Dendritic cell treated with granulocyte-macrophage colony-stimulating factor and Interleukin-4, amounts not matched to agents 40 ng/mL and 50 ng/mL, for 4 days (primary cell): ENCODE measurements at regions of chr15 and their contacts with region 1.

Region 1: DNA sequence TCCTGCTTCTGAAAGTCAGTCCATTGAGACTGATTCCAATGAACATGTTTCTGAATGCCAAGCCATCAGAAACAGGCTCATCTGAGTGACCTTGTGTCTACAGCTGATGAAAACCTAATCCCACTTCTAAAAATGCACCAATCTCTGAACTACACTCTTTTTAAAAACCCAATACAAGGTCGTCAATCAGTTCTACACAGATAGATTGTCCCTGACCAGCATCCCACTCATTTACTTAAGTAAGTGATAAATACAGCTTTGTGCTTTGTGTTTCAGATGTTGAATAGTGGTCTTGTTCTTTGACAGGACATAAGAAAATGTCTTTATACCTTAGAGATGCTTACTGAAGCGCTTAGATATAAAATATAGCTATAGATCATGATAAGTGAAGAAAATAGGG is 20.2 kb upstream of the SCG3 start:
- H3K4me3 Mint-ChIP-seq: no peak overlapping the region
- H3K27ac Mint-ChIP-seq: no peak overlapping the region
- H3K4me1 Mint-ChIP-seq: peaks cover 7% of the 10 kb centered on the region
- H3K27me3 Mint-ChIP-seq: no peaks in the 10 kb centered on the region

Region 2: DNA sequence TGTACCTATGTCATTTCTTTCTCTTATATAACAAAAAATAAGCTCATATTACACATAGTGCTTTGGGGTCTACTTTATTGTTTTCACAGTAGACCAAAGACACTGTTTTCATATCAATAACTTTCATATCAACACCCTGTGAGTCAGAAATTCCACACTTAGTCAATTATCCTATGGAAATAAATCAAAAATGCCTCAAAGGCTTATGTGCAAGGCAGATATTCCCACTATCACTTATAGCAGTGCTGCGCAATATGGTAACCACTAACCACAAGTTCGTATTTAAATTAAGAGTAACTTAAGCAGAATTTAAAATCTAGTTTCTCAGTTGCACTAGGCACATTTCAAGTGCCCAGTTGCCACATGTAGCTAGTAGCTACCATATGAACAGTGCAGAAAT is 36.1 kb after region 1 on chr15:
- intact Hi-C with region 1: loop called (anchors 5 kb)
- H3K4me3 Mint-ChIP-seq: no peak overlapping the region
- H3K27ac Mint-ChIP-seq: no peak overlapping the region
- H3K4me1 Mint-ChIP-seq: peaks cover 24% of the 10 kb centered on the region
- H3K27me3 Mint-ChIP-seq: peaks cover 26% of the 10 kb centered on the region